Tibial artery (tissue), 4 donors: ENCODE measurements at regions of chr19 and their contacts with region 1.

Region 1: GRCh38 chr19:53195265-53195903 is 2.2 kb upstream of the ZNF665 start:
- DNase-seq: peak; percentile 81 to 90
- H3K4me3 ChIP-seq: no peak overlapping the region
- H3K27ac ChIP-seq: peak overlapping the region in 1 of 2 donors; percentile 14
- H3K4me1 ChIP-seq: peaks cover 0 to 25% (median 13%) of the 10 kb centered on the region in 4 donors
- H3K27me3 ChIP-seq: no peaks in the 10 kb centered on the region
- CTCF ChIP-seq: peak; percentile 86 to 87

Region 2: DNA sequence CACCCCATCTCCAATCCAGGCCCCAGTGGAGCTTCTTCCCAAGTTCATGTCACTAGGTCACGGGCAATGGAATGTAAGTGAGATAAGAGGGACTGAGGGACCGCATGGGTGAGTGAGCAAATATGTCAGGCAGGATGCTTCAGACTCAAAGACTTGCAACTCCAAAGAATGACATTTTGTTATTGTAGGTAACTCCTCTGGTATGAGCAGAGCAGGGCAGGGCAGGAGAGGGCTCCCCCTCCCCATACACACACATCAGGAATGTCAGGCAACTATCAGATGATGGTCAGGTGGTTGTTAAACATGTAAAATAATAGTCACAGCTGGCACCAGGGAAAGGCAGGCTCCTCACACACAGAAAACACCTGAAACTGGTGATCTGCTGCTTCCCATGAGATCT is 140.3 kb before region 1 on chr19:
- intact Hi-C with region 1: no loop called
- DNase-seq: no peak
- H3K4me3 ChIP-seq: no peak overlapping the region
- H3K27ac ChIP-seq: no peak overlapping the region
- H3K4me1 ChIP-seq: no peaks in the 10 kb centered on the region
- H3K27me3 ChIP-seq: no peaks in the 10 kb centered on the region
- CTCF ChIP-seq: no peak

Region 3: GRCh38 chr19:53086949-53087348 is 108.4 kb before region 1 on chr19:
- intact Hi-C with region 1: no loop called
- DNase-seq: no peak
- H3K4me3 ChIP-seq: no peak overlapping the region
- H3K27ac ChIP-seq: no peak overlapping the region
- H3K4me1 ChIP-seq: no peaks in the 10 kb centered on the region
- H3K27me3 ChIP-seq: no peaks in the 10 kb centered on the region
- CTCF ChIP-seq: no peak

Region 4: DNA sequence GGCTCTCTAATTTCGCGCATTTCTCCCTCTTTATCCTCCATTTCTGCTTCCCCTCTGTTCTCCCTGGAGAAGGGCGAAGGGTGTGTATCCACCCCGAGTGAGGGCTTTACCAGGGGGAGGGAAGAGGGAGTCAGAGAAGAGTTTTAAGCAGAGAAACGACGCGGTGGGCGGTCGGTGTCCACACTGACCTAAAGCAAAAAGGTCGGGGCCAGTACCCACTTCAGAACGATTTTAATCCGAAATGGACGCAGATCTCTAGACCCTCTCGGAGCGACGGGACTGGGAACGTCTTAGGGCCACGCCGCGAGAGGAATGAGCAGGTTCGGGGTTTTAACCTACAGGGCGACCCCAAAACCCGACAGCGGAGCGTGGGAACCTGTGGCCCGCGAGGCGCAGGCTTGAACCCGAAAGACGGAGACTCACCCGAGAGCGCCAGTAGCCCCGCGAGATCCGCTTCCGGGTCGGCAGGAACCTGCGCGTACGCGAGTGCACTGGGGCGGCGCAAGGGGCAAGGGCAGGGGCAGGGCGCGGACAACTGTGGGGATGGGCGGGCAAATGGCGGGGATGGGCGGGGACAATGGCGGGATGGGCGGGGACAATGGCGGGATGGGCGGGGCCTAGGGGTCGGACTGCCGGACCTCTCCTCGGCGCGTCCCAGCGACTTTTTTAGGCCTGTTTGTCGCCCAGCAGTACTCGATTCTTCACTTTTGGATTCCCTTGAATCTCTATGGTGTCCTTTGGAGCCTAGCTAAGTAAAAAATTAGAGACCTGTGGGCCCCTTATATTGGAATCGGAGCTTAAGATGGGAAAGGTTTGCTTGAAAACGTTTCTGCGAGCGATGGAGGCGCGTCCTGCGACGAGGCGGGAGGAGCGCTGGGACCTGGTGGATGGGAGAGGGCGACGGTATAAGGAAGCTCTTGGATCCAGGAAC is 59.3 kb after region 1 on chr19 and contains the start of gene ZNF677:
- intact Hi-C with region 1: loop called (anchors 10 kb)
- DNase-seq: peak; percentile 90 to 96
- H3K4me3 ChIP-seq: peak within 1 kb of the TSS; percentile 78 to 81
- H3K27ac ChIP-seq: peak within 1 kb of the TSS; percentile 81 to 89
- H3K4me1 ChIP-seq: peaks cover 0 to 15% (median 10%) of the 10 kb centered on the region in 4 donors
- H3K27me3 ChIP-seq: no peaks in the 10 kb centered on the region
- CTCF ChIP-seq: no peak

Region 5: GRCh38 chr19:53333463-53334449 is 138.4 kb after region 1 on chr19 and contains the start of gene ZNF845:
- intact Hi-C with region 1: loop called (anchors 10 kb)
- DNase-seq: peak; percentile 93 to 96
- H3K4me3 ChIP-seq: peak within 1 kb of the TSS; percentile 64 to 67
- H3K27ac ChIP-seq: peak within 1 kb of the TSS; percentile 78 to 86
- H3K4me1 ChIP-seq: peaks cover 0 to 13% (median 8%) of the 10 kb centered on the region in 4 donors
- H3K27me3 ChIP-seq: no peaks in the 10 kb centered on the region
- CTCF ChIP-seq: no peak

Region 6: DNA sequence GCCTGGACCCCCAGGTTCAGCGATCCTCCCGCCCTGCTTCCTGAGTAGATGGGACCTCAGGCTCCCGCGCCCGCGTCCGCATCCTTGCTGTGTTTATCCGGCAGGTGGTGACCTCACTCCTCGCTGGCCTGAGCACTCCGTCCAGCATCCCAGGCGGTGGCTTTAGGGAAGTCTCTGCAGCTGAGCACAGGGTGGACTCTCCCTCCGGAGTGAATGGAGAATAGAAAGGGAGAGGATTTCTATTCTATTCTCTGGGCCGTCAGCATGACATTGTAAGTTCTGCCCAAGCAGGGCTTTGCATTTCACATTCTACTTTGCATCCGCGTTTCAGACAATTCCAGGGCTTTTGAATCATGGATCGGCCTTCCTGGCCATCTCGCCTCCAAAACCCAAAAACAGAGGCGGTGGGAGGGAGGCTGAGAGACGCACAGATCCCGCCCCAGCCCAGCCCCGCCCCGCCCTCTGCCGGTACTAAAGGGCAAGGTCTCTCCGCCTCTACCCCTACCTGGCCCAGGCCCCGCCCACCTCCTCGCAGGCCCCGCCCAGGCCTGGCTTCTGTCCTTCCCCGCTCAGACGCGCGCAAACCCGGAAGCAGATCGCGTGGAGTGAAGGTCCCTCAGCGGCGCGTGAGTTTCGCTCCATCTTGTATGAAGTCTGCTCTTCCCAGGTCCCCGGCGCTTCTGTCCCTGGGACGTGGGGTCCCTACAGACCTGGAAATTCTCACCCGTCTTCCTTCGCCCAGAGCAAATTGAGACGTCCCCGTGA is 169.9 kb after region 1 on chr19 and contains the start of gene ZNF525:
- intact Hi-C with region 1: loop called (anchors 5 kb)
- DNase-seq: peak; percentile 91 to 95
- H3K4me3 ChIP-seq: peak within 1 kb of the TSS; percentile 68 to 77
- H3K27ac ChIP-seq: peak within 1 kb of the TSS; percentile 80 to 83
- H3K4me1 ChIP-seq: peaks cover 0 to 13% (median 1%) of the 10 kb centered on the region in 4 donors
- H3K27me3 ChIP-seq: no peaks in the 10 kb centered on the region
- CTCF ChIP-seq: peak in 1 of 2 experiments; percentile 16

Region 7: GRCh38 chr19:53381379-53381778 is 186.0 kb after region 1 on chr19:
- intact Hi-C with region 1: no loop called
- DNase-seq: no peak
- H3K4me3 ChIP-seq: no peak overlapping the region
- H3K27ac ChIP-seq: no peak overlapping the region
- H3K4me1 ChIP-seq: no peaks in the 10 kb centered on the region
- H3K27me3 ChIP-seq: no peaks in the 10 kb centered on the region
- CTCF ChIP-seq: no peak

Region 8: DNA sequence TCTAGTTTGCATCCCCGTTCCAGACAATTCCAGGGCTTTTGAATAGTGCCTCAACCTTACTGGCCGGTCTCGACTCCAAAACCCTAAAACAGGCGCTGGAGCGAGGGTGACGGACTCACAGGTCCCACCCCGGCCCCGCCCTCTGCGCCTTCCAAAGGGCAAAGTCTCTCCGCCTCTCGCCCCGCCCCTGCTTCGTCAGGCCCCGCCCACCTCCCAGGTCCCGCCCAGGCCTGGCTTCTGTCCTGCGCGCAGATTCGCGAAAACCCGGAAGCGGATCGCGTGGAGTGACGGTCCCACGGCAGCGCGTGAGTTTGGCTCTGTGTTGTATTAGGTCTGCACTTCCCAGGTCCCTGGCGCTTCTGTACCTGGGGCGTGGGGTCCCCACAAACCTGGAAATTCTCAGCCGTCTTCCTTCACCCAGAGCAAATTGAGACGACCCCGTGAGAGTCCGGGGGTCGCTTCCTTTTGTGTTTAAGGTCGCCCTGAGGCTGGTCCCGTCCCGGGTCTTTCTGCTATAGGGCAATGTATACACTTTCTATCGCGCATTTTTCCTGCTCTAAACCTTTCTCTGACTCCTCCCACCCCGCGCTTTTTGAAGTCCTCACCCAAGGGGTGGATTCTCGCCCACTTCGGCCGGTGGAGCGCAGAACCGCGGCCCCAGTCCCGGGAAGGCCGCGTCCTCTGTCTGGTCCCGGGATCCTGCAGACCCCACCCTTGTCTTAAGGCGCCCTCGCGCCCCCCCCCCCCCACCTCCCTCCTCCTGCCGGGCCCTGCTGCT is 272.3 kb after region 1 on chr19 and contains the start of gene ZNF813:
- intact Hi-C with region 1: loop called (anchors 2 kb)
- DNase-seq: peak; percentile 96 to 97
- H3K4me3 ChIP-seq: peak within 1 kb of the TSS; percentile 60 to 83
- H3K27ac ChIP-seq: peak within 1 kb of the TSS; percentile 53 to 76
- H3K4me1 ChIP-seq: peaks cover 0 to 22% (median 8%) of the 10 kb centered on the region in 4 donors
- H3K27me3 ChIP-seq: no peaks in the 10 kb centered on the region
- CTCF ChIP-seq: no peak